ENCODE measurements at regions of chr17 and their contacts with region 1.

Region 1: GRCh38 chr17:46171939-46172338 is 21.3 kb downstream of the KANSL1 start:
- DNase-seq: peak in 4 of 9 experiments; percentile 22 to 52 (median 43)
- ATAC-seq: peak; percentile 79
- H3K4me3 ChIP-seq: no peak overlapping the region
- H3K4me3 Mint-ChIP-seq: peak overlapping the region; percentile 78
- H3K27ac ChIP-seq: peak overlapping the region in 1 of 2 experiments; percentile 43
- H3K27ac Mint-ChIP-seq: peak overlapping the region; percentile 96
- H3K4me1 ChIP-seq: peaks cover 78% of the 10 kb centered on the region
- H3K4me1 Mint-ChIP-seq: peaks cover 95% of the 10 kb centered on the region
- H3K27me3 ChIP-seq: no peaks in the 10 kb centered on the region
- H3K27me3 Mint-ChIP-seq: no peaks in the 10 kb centered on the region
- CTCF ChIP-seq: no peak

Region 2: DNA sequence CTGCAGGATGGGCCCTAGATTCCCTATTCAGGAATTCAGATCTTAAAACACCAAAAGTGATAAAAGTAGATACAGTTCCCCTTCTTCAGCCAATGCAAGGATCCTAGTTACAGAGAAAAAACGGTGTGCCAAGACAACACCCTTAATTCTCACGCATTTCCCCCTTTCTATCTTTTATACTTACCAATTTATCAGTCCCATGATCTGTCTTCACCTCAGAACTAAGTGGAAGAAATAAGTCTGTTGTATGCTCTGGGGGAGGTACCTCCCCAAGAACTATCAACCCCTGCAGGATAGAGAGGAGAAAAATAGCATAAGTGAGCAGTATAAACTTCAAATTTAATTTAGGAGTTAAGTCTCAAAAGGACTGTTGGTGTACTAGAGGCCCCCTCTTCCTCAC is 89.7 kb before region 1 on chr17:
- CTCF ChIA-PET with region 1: no interaction called
- POLR2A ChIA-PET with region 1: no interaction called
- intact Hi-C with region 1: loop called in 1 of 2 experiments (anchors 5 kb)
- DNase-seq: no peak
- ATAC-seq: no peak
- H3K4me3 ChIP-seq: no peak overlapping the region
- H3K4me3 Mint-ChIP-seq: no peak overlapping the region
- H3K27ac ChIP-seq: no peak overlapping the region
- H3K27ac Mint-ChIP-seq: peak overlapping the region; percentile 4
- H3K4me1 ChIP-seq: peaks cover 6% of the 10 kb centered on the region
- H3K4me1 Mint-ChIP-seq: peaks cover 67% of the 10 kb centered on the region
- H3K27me3 ChIP-seq: no peaks in the 10 kb centered on the region
- H3K27me3 Mint-ChIP-seq: no peaks in the 10 kb centered on the region
- CTCF ChIP-seq: no peak

Region 3: GRCh38 chr17:46129302-46129701 is 42.6 kb before region 1 on chr17:
- CTCF ChIA-PET with region 1: no interaction called
- POLR2A ChIA-PET with region 1: no interaction called
- intact Hi-C with region 1: no loop called
- DNase-seq: no peak
- ATAC-seq: no peak
- H3K4me3 ChIP-seq: no peak overlapping the region
- H3K4me3 Mint-ChIP-seq: no peak overlapping the region
- H3K27ac ChIP-seq: no peak overlapping the region
- H3K27ac Mint-ChIP-seq: peak overlapping the region; percentile 39
- H3K4me1 ChIP-seq: peaks cover 80% of the 10 kb centered on the region
- H3K4me1 Mint-ChIP-seq: peaks cover 91% of the 10 kb centered on the region
- H3K27me3 ChIP-seq: no peaks in the 10 kb centered on the region
- H3K27me3 Mint-ChIP-seq: no peaks in the 10 kb centered on the region
- CTCF ChIP-seq: no peak

Region 4: DNA sequence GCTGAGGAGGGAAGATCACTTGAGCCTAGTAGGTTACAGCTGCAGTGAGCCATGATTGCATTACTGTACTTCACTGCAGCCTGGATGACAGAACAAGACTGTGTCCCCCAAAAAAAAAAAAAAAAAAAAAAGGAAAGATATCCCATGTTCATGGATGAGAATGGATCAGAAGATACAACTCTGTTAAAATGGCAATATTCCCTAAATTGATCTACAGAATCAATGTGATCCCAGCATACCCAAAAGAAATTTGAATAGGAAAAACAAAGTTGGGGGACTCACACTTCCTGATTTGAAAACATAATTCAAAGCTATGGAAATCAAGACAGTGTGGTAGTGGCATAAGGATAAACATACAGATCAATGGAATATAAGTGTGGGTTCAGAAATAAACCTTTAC is 34.0 kb after region 1 on chr17:
- CTCF ChIA-PET with region 1: no interaction called
- POLR2A ChIA-PET with region 1: no interaction called
- intact Hi-C with region 1: no loop called
- DNase-seq: no peak
- ATAC-seq: no peak
- H3K4me3 ChIP-seq: no peak overlapping the region
- H3K4me3 Mint-ChIP-seq: no peak overlapping the region
- H3K27ac ChIP-seq: no peak overlapping the region
- H3K27ac Mint-ChIP-seq: no peak overlapping the region
- H3K4me1 ChIP-seq: peaks cover 23% of the 10 kb centered on the region
- H3K4me1 Mint-ChIP-seq: peaks cover 36% of the 10 kb centered on the region
- H3K27me3 ChIP-seq: no peaks in the 10 kb centered on the region
- H3K27me3 Mint-ChIP-seq: no peaks in the 10 kb centered on the region
- CTCF ChIP-seq: no peak

Measured in CD8-positive, alpha-beta T cell (primary cell).